Right cardiac atrium (tissue), 5 donors: ENCODE measurements at regions of chr11 and their contacts with region 1.

Region 1: GRCh38 chr11:69888483-69889076 is 69.4 kb upstream of the FGF3 start:
- DNase-seq: peak in 2 of 3 donors; percentile 55 to 71
- ATAC-seq: peak; percentile 19 to 48
- H3K4me3 ChIP-seq: no peak overlapping the region
- H3K27ac ChIP-seq: no peak overlapping the region
- H3K4me1 ChIP-seq: no peaks in the 10 kb centered on the region
- H3K27me3 ChIP-seq: no peaks in the 10 kb centered on the region

Region 2: GRCh38 chr11:69683764-69684333 is 204.7 kb before region 1 on chr11:
- intact Hi-C with region 1: loop called in 3 of 4 experiments (anchors 2 to 5 kb)
- DNase-seq: peak in 1 of 3 donors; percentile 31
- ATAC-seq: no peak
- H3K4me3 ChIP-seq: no peak overlapping the region
- H3K27ac ChIP-seq: no peak overlapping the region
- H3K4me1 ChIP-seq: no peaks in the 10 kb centered on the region
- H3K27me3 ChIP-seq: no peaks in the 10 kb centered on the region

Region 3: GRCh38 chr11:69704508-69705253 is 183.9 kb before region 1 on chr11:
- intact Hi-C with region 1: loop called in 1 of 4 experiments (anchors 10 kb)
- DNase-seq: peak in 1 of 3 donors; percentile 52
- ATAC-seq: no peak
- H3K4me3 ChIP-seq: peak overlapping the region; percentile 29
- H3K27ac ChIP-seq: no peak overlapping the region
- H3K4me1 ChIP-seq: no peaks in the 10 kb centered on the region
- H3K27me3 ChIP-seq: no peaks in the 10 kb centered on the region